ENCODE measurements at regions of chr2 and their contacts with region 1.

Region 1: GRCh38 chr2:134039912-134040581 is 213.8 kb upstream of the MGAT5 start:
- DNase-seq: no peak
- ATAC-seq: peak; percentile 57
- H3K4me3 Mint-ChIP-seq: peak overlapping the region; percentile 65
- H3K27ac Mint-ChIP-seq: peak overlapping the region; percentile 90
- H3K4me1 Mint-ChIP-seq: peaks cover 66% of the 10 kb centered on the region
- H3K27me3 Mint-ChIP-seq: no peaks in the 10 kb centered on the region
- CTCF ChIP-seq: no peak

Region 2: GRCh38 chr2:134021830-134022524 is 18.1 kb before region 1 on chr2:
- CTCF ChIA-PET with region 1: no interaction called
- POLR2A ChIA-PET with region 1: no interaction called
- intact Hi-C with region 1: loop called (anchors 1 kb)
- DNase-seq: no peak
- ATAC-seq: peak; percentile 98
- H3K4me3 Mint-ChIP-seq: peak overlapping the region; percentile 35
- H3K27ac Mint-ChIP-seq: peak overlapping the region; percentile 74
- H3K4me1 Mint-ChIP-seq: peaks cover 35% of the 10 kb centered on the region
- H3K27me3 Mint-ChIP-seq: no peaks in the 10 kb centered on the region
- CTCF ChIP-seq: no peak

Region 3: DNA sequence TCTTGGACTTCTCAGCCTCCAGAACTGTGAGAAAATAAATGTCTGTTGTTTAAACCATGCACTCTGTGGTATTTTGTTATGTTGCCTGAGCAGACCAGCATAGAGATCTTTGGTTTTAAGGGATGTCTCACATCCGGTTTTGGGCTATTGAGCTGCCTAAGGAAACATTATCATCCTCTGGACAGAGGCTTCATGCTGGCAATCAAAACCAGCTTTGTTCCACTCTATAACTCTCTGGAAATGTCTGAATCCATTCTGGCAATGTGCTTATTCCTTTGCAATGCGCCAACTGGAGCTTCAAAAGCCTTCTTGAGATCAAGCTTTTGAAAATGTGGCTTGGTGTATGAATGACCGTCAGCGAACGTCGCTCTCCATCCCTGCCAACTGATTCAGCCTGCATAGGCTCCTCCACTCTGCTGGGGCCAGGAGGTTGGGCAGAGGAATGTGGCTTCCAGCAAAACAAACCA is 30.3 kb after region 1 on chr2:
- CTCF ChIA-PET with region 1: no interaction called
- POLR2A ChIA-PET with region 1: no interaction called
- intact Hi-C with region 1: loop called (anchors 1 kb)
- DNase-seq: no peak
- ATAC-seq: no peak
- H3K4me3 Mint-ChIP-seq: no peak overlapping the region
- H3K27ac Mint-ChIP-seq: no peak overlapping the region
- H3K4me1 Mint-ChIP-seq: no peaks in the 10 kb centered on the region
- H3K27me3 Mint-ChIP-seq: no peaks in the 10 kb centered on the region
- CTCF ChIP-seq: no peak

Region 4: GRCh38 chr2:134079373-134079772 is 39.3 kb after region 1 on chr2:
- CTCF ChIA-PET with region 1: no interaction called
- POLR2A ChIA-PET with region 1: no interaction called
- intact Hi-C with region 1: loop called (anchors 1 kb)
- DNase-seq: peak; percentile 23
- ATAC-seq: peak; percentile 97
- H3K4me3 Mint-ChIP-seq: no peak overlapping the region
- H3K27ac Mint-ChIP-seq: peak overlapping the region; percentile 32
- H3K4me1 Mint-ChIP-seq: peaks cover 23% of the 10 kb centered on the region
- H3K27me3 Mint-ChIP-seq: no peaks in the 10 kb centered on the region
- CTCF ChIP-seq: no peak

Region 5: GRCh38 chr2:134127496-134127895 is 87.4 kb after region 1 on chr2:
- CTCF ChIA-PET with region 1: no interaction called
- POLR2A ChIA-PET with region 1: no interaction called
- intact Hi-C with region 1: no loop called
- DNase-seq: no peak
- ATAC-seq: peak; percentile 59
- H3K4me3 Mint-ChIP-seq: peak overlapping the region; percentile 56
- H3K27ac Mint-ChIP-seq: peak overlapping the region; percentile 65
- H3K4me1 Mint-ChIP-seq: peaks cover 88% of the 10 kb centered on the region
- H3K27me3 Mint-ChIP-seq: no peaks in the 10 kb centered on the region
- CTCF ChIP-seq: no peak

Region 6: GRCh38 chr2:134253804-134254203 is 213.8 kb after region 1 on chr2 and contains the start of gene MGAT5:
- CTCF ChIA-PET with region 1: no interaction called
- POLR2A ChIA-PET with region 1: no interaction called
- intact Hi-C with region 1: loop called (anchors 5 kb)
- DNase-seq: no peak
- ATAC-seq: peak; percentile 43
- H3K4me3 Mint-ChIP-seq: peak within 1 kb of the TSS; percentile 74
- H3K27ac Mint-ChIP-seq: peak within 1 kb of the TSS; percentile 95
- H3K4me1 Mint-ChIP-seq: peaks cover 95% of the 10 kb centered on the region
- H3K27me3 Mint-ChIP-seq: no peaks in the 10 kb centered on the region
- CTCF ChIP-seq: no peak
- total RNA-seq, gene MGAT5: 66.7 and 69.0 TPM in 2 replicates